Activated naive CD4-positive, alpha-beta T cell treated with anti-CD3 and anti-CD28 coated beads for 36 hours (primary cell): ENCODE measurements at regions of chr1 and their contacts with region 1.

Region 1: GRCh38 chr1:160675641-160676410 is 29.0 kb upstream of the SLAMF1 start:
- DNase-seq: peak; percentile 92
- H3K4me3 Mint-ChIP-seq: no peak overlapping the region
- H3K27ac Mint-ChIP-seq: no peak overlapping the region
- H3K4me1 Mint-ChIP-seq: peaks cover 41% of the 10 kb centered on the region
- H3K27me3 Mint-ChIP-seq: no peaks in the 10 kb centered on the region

Region 2: DNA sequence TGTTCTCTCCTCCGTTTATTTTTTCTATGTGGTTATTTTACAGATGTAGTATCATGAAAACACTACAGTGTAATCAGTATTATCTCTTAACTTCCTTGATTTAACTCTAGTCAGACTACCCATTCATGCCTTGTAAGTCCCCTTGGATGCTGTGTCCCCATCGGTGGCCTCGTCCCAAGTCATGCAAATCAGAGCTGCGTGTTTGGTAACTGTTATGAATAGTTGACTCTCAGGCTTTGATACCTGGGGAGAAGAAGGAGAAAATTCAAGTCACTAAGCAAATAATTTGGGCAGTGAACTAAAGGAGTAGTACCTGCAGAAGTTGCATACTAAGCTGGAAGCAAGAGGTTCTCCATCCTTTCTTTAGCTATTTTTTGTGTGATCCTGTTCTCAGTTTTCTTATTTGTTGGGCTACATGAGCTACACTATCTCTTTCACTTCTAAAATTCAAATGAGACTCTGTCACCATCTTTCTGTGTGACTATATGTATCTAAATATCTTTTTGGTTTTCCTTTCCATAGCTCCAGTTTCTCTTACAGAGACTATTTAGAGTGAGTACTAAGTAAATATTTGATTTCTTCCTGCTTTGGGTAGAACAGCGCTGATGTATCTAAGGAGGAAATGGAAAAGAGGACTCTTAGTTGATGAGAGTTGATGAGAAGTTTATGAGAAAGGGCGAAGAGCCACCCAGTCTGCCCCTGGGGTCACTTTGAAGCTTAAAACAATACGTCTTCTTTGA is 224.5 kb before region 1 on chr1:
- CTCF ChIA-PET with region 1: no interaction called
- intact Hi-C with region 1: loop called (anchors 5 kb)
- DNase-seq: no peak
- H3K4me3 Mint-ChIP-seq: peak overlapping the region; percentile 56
- H3K27ac Mint-ChIP-seq: peak overlapping the region; percentile 93
- H3K4me1 Mint-ChIP-seq: peaks cover 76% of the 10 kb centered on the region
- H3K27me3 Mint-ChIP-seq: no peaks in the 10 kb centered on the region

Region 3: DNA sequence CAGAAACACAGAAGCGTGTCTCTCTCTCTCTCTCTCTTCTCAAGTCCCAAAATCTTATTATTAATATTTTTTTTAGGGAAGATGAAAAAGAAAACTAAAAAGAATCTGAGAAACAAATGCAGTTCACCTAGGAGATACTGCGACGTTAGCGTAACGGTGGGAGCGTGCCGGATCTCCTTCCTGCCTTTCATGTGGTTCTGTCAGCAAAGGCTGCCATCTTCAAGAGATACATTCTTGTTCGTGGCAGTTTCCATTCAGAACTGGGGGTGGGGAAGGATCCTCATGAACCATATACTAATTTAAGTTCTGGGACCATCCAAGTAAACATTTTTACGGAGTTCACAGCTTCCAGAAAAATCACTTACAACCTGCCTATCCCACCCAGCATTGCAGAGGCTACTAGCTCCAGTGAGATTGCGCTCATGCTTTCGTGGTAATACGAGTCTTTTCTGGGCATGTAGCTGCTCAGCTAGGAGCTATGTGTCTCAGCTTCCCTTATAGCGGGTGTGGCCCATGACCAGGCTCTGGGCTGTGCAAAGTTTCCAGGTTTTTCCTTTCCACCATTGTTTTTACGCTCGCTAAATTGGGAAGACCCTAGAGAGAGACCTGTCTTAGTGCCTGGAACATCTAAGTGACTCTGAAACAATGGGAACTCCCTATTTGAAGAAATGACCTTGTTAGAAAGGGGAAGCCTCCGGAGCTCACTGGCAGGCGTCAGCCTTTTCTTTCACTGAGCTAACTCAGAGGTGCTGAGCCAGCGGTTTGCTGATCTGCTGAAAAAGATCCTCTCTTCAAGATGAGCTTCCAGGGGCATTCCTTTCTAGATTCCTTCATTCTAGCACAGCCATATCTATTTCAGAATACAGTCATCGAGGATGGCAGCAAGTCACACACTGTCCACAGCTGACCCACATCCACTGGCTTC is 46.3 kb before region 1 on chr1:
- CTCF ChIA-PET with region 1: interaction called, 32 read pairs
- intact Hi-C with region 1: loop called (anchors 1 kb)
- DNase-seq: peak; percentile 91
- H3K4me3 Mint-ChIP-seq: peak overlapping the region; percentile 66
- H3K27ac Mint-ChIP-seq: peak overlapping the region; percentile 96
- H3K4me1 Mint-ChIP-seq: peaks cover 95% of the 10 kb centered on the region
- H3K27me3 Mint-ChIP-seq: no peaks in the 10 kb centered on the region

Region 4: DNA sequence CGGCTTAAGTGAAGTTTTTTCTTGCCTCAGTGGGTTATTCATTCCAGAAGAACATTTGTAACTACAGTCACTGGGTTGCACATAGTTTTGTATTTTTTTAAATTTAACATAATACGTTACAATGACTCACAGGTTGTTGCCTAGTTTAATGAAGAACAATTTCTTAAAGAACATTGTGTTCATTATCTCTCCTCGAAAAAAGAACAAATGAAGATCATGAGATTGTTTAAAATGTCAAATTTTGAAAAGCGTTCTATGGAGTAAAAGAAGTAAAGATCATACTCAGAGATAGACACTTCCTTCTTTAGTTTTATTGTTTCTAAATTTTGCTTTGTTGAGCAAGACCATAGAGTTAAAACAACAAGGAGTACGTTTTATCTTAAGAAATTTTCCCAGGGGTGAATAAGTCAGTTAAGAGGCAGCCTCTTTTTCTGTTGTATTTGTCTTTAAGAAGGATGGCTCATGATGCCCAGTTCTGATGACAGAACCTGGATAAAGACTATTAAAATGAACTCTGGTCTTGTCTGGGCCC is 18.5 kb before region 1 on chr1:
- CTCF ChIA-PET with region 1: interaction called, 5 read pairs
- intact Hi-C with region 1: loop called (anchors 1 kb)
- DNase-seq: no peak
- H3K4me3 Mint-ChIP-seq: peak overlapping the region; percentile 23
- H3K27ac Mint-ChIP-seq: peak overlapping the region; percentile 91
- H3K4me1 Mint-ChIP-seq: peaks cover 81% of the 10 kb centered on the region
- H3K27me3 Mint-ChIP-seq: no peaks in the 10 kb centered on the region

Region 5: DNA sequence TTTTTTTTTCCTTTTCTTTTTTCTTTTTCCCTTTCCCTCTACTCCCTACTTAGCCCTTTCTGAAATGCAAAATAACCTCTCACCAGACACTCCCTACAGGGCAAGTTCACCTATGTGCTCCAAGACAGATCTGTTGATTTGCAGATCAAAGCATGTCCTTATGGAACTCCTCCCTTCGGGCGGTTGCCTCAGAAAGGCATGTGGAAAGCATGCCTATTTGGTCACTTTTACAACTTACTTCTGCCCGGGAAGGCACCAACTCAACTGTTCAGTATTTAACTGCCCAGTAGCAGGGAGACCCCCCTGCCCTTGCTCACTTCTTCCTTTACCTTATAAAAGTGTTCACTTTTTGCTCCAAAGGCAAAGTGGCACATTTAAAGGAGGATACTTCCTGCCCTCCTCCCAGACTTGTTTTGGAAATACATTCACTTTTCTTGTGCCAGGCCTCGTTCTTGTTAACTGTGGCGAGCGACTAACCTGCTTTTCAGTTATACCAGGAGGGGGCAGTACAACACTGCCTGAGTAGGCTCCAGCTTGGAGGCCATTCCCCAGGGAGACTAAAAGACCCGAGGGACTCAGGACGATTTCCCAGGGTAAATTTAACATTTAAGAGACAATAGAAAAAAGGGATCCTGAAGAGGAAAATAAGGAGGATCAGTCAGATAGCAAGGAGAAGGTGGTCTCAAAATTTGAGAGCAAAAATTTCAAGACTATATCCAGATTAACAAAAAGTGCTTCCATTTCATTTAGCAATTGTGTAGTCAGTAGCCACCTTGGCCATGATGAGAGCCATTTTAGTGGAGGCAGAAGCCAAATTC is 50.9 kb after region 1 on chr1:
- CTCF ChIA-PET with region 1: interaction called, 84 read pairs
- intact Hi-C with region 1: loop called (anchors 1 kb)
- DNase-seq: peak; percentile 81
- H3K4me3 Mint-ChIP-seq: no peak overlapping the region
- H3K27ac Mint-ChIP-seq: no peak overlapping the region
- H3K4me1 Mint-ChIP-seq: peaks cover 34% of the 10 kb centered on the region
- H3K27me3 Mint-ChIP-seq: no peaks in the 10 kb centered on the region

Region 6: DNA sequence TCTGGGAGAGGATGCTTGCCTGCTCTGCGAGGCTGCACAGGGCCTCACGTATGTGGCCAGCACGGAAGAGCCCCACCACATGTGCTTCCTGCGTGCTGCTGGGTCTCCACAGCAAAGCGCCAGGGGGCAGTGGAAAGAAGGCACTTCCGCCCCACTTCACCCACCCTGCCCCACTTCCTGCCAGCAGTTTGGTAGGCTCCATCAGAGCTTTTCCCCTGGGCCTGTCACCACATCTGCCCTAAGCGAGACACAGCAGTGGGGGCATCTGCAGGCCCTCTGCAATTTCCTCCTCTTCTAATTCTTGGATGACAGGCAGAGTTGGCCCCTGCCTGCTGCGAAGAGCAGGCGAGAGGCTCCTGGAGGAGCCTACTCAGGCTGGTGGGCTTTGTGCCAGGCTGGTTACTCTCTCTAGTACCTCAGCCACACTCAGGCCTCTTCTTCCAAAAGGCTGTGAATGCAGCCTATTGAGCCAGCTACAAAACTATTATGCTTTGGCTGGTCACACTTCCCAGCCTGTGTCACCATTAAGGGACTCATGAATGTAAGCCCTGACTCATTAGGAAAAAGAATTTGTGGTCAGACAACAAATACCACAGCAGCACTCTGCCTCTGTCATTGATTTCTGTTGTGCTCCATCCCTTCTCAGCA is 161.9 kb after region 1 on chr1:
- CTCF ChIA-PET with region 1: interaction called, 4 read pairs
- intact Hi-C with region 1: loop called (anchors 2 kb)
- DNase-seq: peak; percentile 90
- H3K4me3 Mint-ChIP-seq: peak overlapping the region; percentile 16
- H3K27ac Mint-ChIP-seq: peak overlapping the region; percentile 82
- H3K4me1 Mint-ChIP-seq: peaks cover 49% of the 10 kb centered on the region
- H3K27me3 Mint-ChIP-seq: no peaks in the 10 kb centered on the region